Gastrocnemius medialis (tissue), 4 donors: ENCODE measurements at regions of chr15 and their contacts with region 1.

Region 1: GRCh38 chr15:78909791-78910228 is 35.0 kb downstream of the CTSH start:
- DNase-seq: no peak
- ATAC-seq: peak in 1 of 2 donors; percentile 32
- H3K4me3 ChIP-seq: no peak overlapping the region
- H3K27ac ChIP-seq: no peak overlapping the region
- H3K4me1 ChIP-seq: peaks cover 13 to 16% of the 10 kb centered on the region in 2 donors
- H3K27me3 ChIP-seq: no peaks in the 10 kb centered on the region
- CTCF ChIP-seq: peak; percentile 37 to 65 (median 57)
- POLR2A ChIP-seq: no peak

Region 2: DNA sequence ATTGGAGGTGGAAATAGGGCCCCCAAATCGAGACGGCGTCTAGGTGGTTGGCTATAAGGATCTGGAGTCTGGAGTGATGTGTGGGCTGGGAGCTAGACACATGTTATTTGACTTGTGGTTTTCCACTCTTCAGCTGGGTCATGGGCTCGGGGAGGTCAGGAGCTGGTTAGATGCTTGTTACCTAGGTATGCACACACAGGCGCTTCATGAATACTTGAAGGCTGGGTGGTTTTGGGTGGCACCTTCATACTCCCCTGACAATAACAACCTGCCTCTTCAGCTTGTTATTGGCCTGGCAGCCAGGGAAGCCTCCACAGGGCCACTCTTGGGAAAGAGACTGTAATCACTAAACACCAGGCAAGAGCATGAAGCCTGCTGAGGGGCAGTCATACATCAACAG is 45.1 kb after region 1 on chr15:
- in situ Hi-C with region 1: no loop called
- intact Hi-C with region 1: no loop called
- DNase-seq: no peak
- ATAC-seq: no peak
- H3K4me3 ChIP-seq: no peak overlapping the region
- H3K27ac ChIP-seq: no peak overlapping the region
- H3K4me1 ChIP-seq: peaks cover 0 to 4% of the 10 kb centered on the region in 2 donors
- H3K27me3 ChIP-seq: no peaks in the 10 kb centered on the region
- CTCF ChIP-seq: no peak
- POLR2A ChIP-seq: no peak

Region 3: DNA sequence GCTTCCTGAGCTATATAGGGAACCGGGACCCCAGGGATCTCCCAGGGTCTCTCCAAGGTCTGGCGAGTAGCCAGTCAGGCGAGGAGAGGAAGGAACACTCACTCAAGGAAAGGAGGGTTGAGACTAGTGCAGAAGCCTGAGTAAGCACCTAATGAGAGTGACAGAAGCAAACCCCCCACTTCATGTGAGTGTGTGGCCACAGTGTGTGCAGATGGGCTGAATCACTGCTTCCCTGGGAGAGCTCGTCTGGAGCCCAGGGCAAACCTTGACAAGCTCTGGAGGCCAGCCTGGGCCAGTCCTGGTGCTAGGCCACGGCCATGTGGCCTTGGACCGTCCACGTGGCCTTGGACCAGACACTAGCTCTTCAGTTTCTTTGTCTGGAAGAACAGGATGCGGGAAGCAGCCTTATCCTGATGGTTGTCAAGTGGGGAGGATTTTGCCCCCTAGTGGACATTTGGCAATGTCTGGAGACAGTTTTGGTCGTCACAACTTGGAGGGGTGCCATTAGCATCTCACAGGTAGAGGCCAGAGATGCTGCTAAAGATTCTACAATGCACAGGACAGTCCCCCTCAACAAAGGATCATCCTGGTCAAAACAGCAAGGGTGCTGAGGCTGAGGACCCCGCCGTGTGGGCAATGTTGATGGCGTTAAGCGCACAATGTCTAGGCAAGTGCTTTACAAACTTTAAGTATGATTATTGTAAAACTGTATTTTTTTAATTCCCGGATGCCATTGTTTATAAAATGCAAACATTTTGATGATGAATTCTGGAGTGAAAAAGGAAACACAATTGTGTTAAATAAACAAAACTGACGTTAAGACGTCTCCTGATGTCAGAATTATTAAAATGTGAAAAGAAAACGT is 69.9 kb after region 1 on chr15:
- in situ Hi-C with region 1: loop called in 1 of 4 experiments (anchors 10 kb)
- intact Hi-C with region 1: no loop called
- DNase-seq: peak in 1 of 2 donors; percentile 30
- ATAC-seq: peak; percentile 40 to 42
- H3K4me3 ChIP-seq: no peak overlapping the region
- H3K27ac ChIP-seq: no peak overlapping the region
- H3K4me1 ChIP-seq: peaks cover 0 to 8% of the 10 kb centered on the region in 2 donors
- H3K27me3 ChIP-seq: no peaks in the 10 kb centered on the region
- CTCF ChIP-seq: peak in 4 of 5 experiments; percentile 52 to 56 (median 55)
- POLR2A ChIP-seq: no peak

Region 4: GRCh38 chr15:79004336-79004735 is 94.5 kb after region 1 on chr15:
- in situ Hi-C with region 1: no loop called
- intact Hi-C with region 1: no loop called
- DNase-seq: no peak
- ATAC-seq: no peak
- H3K4me3 ChIP-seq: no peak overlapping the region
- H3K27ac ChIP-seq: no peak overlapping the region
- H3K4me1 ChIP-seq: no peaks in the 10 kb centered on the region
- H3K27me3 ChIP-seq: no peaks in the 10 kb centered on the region
- CTCF ChIP-seq: no peak
- POLR2A ChIP-seq: no peak